ENCODE measurements at regions of chr17 and their contacts with region 1.

Region 1: GRCh38 chr17:30790279-30790678 is 34.2 kb downstream of the CRLF3 start:
- DNase-seq: no peak
- ATAC-seq: no peak
- H3K4me3 Mint-ChIP-seq: no peak overlapping the region
- H3K27ac Mint-ChIP-seq: peak overlapping the region; percentile 13
- H3K4me1 Mint-ChIP-seq: no peaks in the 10 kb centered on the region
- H3K27me3 Mint-ChIP-seq: no peaks in the 10 kb centered on the region
- CTCF ChIP-seq: no peak

Region 2: DNA sequence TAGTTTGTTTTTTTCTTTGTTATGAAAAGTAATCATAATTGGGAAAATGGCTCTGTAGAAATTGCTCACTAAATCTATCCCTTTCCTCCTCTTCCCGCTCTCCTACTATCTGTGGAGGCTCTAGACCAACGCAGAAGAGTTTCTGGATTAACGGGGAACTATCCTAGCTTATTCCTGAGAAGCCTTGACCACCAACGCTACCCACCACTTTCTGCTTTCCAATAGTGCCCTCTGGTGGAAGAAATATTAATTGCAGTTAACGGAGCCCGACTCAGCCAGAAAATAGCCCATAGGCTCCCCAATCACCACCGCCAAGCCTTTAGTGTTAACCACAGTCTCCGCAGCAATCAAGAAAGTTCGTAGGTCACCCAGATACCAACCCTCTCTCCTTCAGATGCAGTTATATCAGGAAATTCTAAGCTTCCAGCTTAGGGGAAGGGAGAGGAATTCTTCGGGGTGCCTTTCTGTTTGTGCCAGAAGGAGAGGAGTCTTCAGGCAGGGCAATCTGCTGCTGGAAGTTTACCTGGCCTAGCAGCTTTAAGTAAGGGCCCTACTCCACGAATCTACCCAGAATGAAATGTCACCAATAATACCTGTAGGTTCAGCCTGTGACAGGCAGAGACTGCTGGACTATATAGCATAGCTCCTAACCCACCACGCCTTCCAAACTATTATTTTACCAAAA is 696.7 kb before region 1 on chr17:
- CTCF ChIA-PET with region 1: no interaction called
- POLR2A ChIA-PET with region 1: no interaction called
- intact Hi-C with region 1: no loop called
- DNase-seq: no peak
- ATAC-seq: peak; percentile 68
- H3K4me3 Mint-ChIP-seq: no peak overlapping the region
- H3K27ac Mint-ChIP-seq: no peak overlapping the region
- H3K4me1 Mint-ChIP-seq: peaks cover 10% of the 10 kb centered on the region
- H3K27me3 Mint-ChIP-seq: peaks cover 21% of the 10 kb centered on the region
- CTCF ChIP-seq: peak; percentile 64

Region 3: GRCh38 chr17:30716461-30717300 is 73.6 kb before region 1 on chr17:
- CTCF ChIA-PET with region 1: no interaction called
- POLR2A ChIA-PET with region 1: no interaction called
- intact Hi-C with region 1: no loop called
- DNase-seq: no peak
- ATAC-seq: no peak
- H3K4me3 Mint-ChIP-seq: no peak overlapping the region
- H3K27ac Mint-ChIP-seq: no peak overlapping the region
- H3K4me1 Mint-ChIP-seq: peaks cover 11% of the 10 kb centered on the region
- H3K27me3 Mint-ChIP-seq: no peaks in the 10 kb centered on the region
- CTCF ChIP-seq: no peak

Region 4: DNA sequence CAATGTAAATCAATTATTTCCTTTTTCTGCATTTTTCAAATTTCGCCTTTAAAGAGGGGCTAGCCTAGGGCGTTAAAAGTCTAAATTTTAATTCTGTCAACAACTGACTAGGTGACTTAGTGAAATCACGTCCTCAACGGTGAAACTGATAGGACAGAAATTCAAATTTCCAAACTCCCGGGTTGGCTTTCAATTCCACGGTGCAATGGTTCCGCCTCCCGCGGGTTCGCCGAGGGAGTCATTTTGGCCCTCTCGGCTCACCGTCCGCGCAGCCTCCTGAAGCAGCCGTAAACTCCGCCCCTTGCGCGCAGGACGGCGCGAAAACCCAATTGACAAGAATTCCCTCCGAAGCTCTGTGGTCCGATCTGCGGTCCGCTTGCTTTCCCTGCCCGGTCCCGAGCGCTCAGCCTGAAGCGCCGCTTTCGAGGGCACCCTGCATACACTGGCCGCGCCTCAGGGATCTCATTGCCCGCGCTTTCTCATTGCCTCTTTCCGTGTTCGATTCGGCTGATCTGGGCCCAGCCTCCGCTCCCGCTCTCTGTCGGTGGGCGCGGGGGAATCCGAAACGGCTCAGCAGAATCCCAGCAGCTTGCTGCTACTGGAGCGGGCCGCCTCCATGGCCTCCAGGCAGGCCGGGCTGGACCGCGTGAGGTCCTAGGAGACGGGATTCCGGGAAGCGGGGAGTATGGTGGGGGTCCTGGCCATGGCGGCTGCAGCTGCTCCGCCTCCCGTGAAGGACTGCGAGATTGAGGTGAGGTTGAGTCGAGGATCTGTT is 41.6 kb after region 1 on chr17 and contains the start of gene ATAD5:
- CTCF ChIA-PET with region 1: no interaction called
- POLR2A ChIA-PET with region 1: no interaction called
- intact Hi-C with region 1: loop called (anchors 5 kb)
- DNase-seq: peak; percentile 84
- ATAC-seq: peak; percentile 97
- H3K4me3 Mint-ChIP-seq: peak within 1 kb of the TSS; percentile 97
- H3K27ac Mint-ChIP-seq: peak within 1 kb of the TSS; percentile 91
- H3K4me1 Mint-ChIP-seq: peaks cover 23% of the 10 kb centered on the region
- H3K27me3 Mint-ChIP-seq: no peaks in the 10 kb centered on the region
- CTCF ChIP-seq: no peak
- total RNA-seq, gene ATAD5: 6.6 and 8.7 TPM in 2 replicates

Measured in activated B cell treated with CpG ODN at 0.5 μM for 24 hours (primary cell).